CD14-positive monocyte (primary cell): ENCODE measurements at regions of chr3 and their contacts with region 1.

Region 1: DNA sequence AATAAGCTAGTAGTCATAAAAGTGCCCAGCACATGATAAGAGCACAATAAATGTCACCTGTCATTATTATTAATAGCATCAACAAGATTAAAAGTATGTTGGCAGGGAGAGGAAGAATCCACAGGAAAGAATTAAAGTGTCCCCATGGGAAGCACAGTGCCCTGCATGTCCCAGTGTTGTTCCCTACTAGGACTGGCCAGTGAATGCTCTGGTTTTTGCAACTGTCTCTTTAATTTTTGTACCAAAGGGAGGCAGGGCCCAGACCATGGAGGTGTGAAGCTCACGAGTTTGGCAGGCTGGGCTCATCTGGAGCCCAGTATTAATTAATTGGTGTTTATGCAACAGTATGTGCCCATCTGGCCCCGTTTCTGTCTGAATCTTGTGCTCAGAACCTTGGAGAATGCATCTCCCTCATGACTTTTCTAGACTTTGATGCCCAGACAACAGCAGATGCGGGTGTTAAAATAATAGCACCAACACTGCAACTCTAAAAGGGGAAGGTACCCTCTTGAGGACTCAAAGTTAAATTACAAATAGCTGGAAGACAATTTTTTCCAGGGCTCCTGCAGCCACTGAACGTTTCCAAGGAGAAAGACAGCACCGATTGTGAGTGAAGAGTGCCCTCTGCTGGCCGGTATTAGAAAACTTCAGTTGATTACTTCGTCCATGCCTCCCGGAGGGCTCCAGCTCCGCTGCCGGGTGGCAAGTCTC is 71.9 kb upstream of the SPATA12 start:
- DNase-seq: peak; percentile 47 to 72 (median 69)
- H3K4me3 ChIP-seq: no peak overlapping the region
- H3K4me3 Mint-ChIP-seq: peak overlapping the region in 1 of 2 donors; percentile 63
- H3K27ac ChIP-seq: no peak overlapping the region
- H3K27ac Mint-ChIP-seq: no peak overlapping the region
- H3K4me1 ChIP-seq: peaks cover 0 to 10% of the 10 kb centered on the region in 2 donors
- H3K4me1 Mint-ChIP-seq: peaks cover 15% of the 10 kb centered on the region
- H3K27me3 ChIP-seq: no peaks in the 10 kb centered on the region
- H3K27me3 Mint-ChIP-seq: peaks cover 6 to 8% (median 7%) of the 10 kb centered on the region in 3 donors
- CTCF ChIP-seq: peak; percentile 92

Region 2: DNA sequence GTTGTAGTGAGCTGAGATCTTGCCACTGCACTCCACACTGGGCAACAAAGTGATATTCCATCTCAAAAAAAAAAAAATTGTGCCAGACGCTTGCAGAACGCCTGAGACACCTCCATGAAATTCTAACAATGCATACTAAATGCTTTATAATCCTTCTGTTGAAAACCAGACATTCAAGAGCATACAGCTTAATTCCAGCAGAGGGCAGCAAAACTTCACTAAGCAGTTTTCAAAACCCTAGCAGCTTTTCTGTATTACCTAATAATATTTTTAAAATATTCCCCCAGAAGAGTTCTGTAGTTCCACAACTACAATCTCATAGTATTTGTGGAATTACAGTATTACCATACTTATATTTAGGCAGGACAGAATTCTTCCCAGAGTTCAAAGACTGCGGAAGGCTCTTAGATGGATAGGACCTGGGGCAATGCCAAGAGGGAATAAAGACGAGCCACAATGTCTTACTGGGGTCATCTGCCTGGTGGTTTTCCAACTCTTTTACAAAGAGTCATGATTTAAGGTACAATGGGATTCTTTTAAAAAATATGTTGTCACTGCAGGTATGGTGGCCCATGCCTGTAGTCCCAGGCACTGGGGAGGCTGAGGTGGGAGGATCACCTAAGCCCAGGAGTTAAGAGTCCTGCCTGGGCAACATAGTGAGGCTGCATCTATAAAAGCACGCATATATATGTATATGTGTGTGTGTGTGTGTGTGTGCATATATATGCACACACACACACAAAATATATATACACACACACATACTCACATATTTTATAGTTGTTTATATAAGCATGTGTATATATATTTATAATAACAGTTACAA is 285.9 kb before region 1 on chr3:
- intact Hi-C with region 1: loop called (anchors 2 kb)
- DNase-seq: peak; percentile 54 to 73 (median 65)
- H3K4me3 ChIP-seq: no peak overlapping the region
- H3K4me3 Mint-ChIP-seq: no peak overlapping the region
- H3K27ac ChIP-seq: no peak overlapping the region
- H3K27ac Mint-ChIP-seq: peak overlapping the region in 1 of 7 donors; percentile 35
- H3K4me1 ChIP-seq: peaks cover 0 to 8% of the 10 kb centered on the region in 2 donors
- H3K4me1 Mint-ChIP-seq: peaks cover 21% of the 10 kb centered on the region
- H3K27me3 ChIP-seq: no peaks in the 10 kb centered on the region
- H3K27me3 Mint-ChIP-seq: peaks cover 0 to 1% (median 0%) of the 10 kb centered on the region in 3 donors
- CTCF ChIP-seq: peak; percentile 77

Region 3: DNA sequence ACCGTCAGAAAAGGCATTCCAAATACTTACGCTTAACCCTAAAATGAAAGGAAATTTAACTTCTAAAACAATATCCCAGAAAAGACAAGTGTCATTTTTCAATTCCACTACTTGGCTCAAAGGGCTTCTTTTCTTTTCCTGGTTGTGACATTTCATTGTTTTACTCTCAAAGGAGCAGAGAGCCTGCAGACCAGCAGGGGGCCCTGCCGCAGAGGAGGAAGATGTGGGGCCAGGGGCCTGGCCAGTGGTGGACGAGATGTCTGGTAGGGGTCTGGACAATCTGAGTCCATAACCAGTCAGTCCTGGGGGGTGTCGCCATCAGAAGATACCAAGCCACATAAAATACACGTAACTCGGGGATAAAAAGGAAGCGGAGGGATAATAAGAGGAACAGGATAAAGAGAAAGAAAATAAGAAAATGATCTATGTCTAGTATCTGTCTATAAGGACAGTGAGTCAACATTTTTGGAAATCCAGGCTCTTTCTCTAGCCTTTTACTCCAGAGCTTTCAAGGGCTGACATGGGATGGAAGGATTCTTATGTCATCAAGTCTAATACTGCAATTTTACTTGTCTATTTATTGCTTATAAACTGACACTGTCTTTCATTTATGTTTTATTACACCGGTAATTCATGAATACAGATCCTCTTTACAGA is 132.6 kb before region 1 on chr3:
- intact Hi-C with region 1: loop called in 1 of 2 experiments (anchors 5 kb)
- DNase-seq: peak; percentile 12 to 35 (median 31)
- H3K4me3 ChIP-seq: peak overlapping the region in 1 of 3 experiments; percentile 52
- H3K4me3 Mint-ChIP-seq: peak overlapping the region; percentile 75 to 92
- H3K27ac ChIP-seq: no peak overlapping the region
- H3K27ac Mint-ChIP-seq: peak overlapping the region in 3 of 7 donors; percentile 15 to 38 (median 32)
- H3K4me1 ChIP-seq: no peaks in the 10 kb centered on the region
- H3K4me1 Mint-ChIP-seq: peaks cover 7% of the 10 kb centered on the region
- H3K27me3 ChIP-seq: no peaks in the 10 kb centered on the region
- H3K27me3 Mint-ChIP-seq: peaks cover 0 to 4% (median 2%) of the 10 kb centered on the region in 3 donors
- CTCF ChIP-seq: peak; percentile 73

Region 4: DNA sequence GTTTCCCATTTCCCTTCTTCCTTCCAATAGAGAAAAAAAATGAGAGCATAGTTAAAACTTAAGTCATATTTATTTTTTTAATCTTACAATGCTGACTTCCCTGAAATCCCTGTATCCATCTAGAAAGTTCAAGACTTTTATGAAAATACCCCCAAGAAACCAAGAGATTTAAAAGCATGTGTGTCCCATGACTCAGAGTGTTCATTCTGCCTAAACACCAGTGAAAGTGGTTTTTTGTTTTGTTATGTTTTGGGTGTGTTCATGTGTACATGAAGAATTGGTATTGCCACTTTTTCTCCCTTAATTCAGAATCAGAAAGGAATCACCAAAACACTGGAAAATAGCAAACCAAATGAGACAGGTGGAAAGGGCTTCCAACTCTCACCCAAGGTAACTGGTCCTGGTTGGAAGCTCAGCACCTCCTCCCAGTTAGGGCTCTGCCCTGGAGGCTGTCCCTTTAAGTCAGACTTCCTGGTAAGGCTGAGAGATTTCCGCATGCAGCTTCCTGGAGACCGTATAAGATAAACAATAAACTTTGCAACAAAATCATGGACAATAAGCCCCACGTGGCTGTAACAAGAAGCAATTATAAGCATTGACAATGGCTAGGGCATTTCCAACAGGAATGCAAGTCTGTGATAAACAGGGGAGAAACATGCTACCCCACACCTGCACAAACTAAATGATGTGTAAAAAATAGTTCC is 64.9 kb before region 1 on chr3:
- intact Hi-C with region 1: loop called in 1 of 2 experiments (anchors 10 kb)
- DNase-seq: peak; percentile 49 to 80 (median 54)
- H3K4me3 ChIP-seq: peak overlapping the region in 1 of 3 experiments; percentile 33
- H3K4me3 Mint-ChIP-seq: peak overlapping the region in 1 of 2 donors; percentile 42
- H3K27ac ChIP-seq: peak overlapping the region in 1 of 2 donors; percentile 64
- H3K27ac Mint-ChIP-seq: peak overlapping the region; percentile 73 to 95 (median 89)
- H3K4me1 ChIP-seq: peaks cover 35 to 44% of the 10 kb centered on the region in 2 donors
- H3K4me1 Mint-ChIP-seq: peaks cover 46% of the 10 kb centered on the region
- H3K27me3 ChIP-seq: no peaks in the 10 kb centered on the region
- H3K27me3 Mint-ChIP-seq: no peaks in the 10 kb centered on the region
- CTCF ChIP-seq: no peak

Region 5: DNA sequence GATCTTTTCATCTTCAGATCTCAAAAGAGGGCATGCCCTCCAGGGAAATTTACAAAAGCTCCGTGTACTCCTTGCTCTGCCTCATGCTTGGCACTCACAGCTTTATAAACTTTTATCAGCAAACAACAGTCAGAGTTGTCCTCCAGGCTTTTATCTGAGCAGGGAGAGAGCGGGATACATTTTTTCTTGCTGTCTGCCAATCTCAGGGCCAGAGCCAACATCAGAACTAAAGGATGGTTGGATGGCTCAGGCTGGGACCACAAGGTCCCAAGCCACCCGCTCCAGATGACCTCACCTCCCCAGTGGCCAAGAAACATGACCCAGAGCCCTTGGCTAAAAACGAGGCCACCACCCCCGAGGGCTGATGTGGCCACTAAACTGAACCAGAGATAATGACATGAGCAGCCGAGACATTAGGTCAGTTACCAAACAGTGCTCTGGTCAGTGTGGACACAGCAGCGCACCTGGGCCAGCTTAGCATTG is 53.0 kb after region 1 on chr3:
- intact Hi-C with region 1: no loop called
- DNase-seq: no peak
- H3K4me3 ChIP-seq: no peak overlapping the region
- H3K4me3 Mint-ChIP-seq: no peak overlapping the region
- H3K27ac ChIP-seq: no peak overlapping the region
- H3K27ac Mint-ChIP-seq: peak overlapping the region in 1 of 7 donors; percentile 9
- H3K4me1 ChIP-seq: no peaks in the 10 kb centered on the region
- H3K4me1 Mint-ChIP-seq: no peaks in the 10 kb centered on the region
- H3K27me3 ChIP-seq: no peaks in the 10 kb centered on the region
- H3K27me3 Mint-ChIP-seq: peaks cover 0 to 4% (median 2%) of the 10 kb centered on the region in 3 donors
- CTCF ChIP-seq: no peak

Region 6: GRCh38 chr3:57100046-57100695 is 111.6 kb after region 1 on chr3:
- intact Hi-C with region 1: loop called in 1 of 2 experiments (anchors 5 kb)
- DNase-seq: peak; percentile 50 to 61 (median 61)
- H3K4me3 ChIP-seq: no peak overlapping the region
- H3K4me3 Mint-ChIP-seq: no peak overlapping the region
- H3K27ac ChIP-seq: no peak overlapping the region
- H3K27ac Mint-ChIP-seq: peak overlapping the region in 1 of 7 donors; percentile 46
- H3K4me1 ChIP-seq: no peaks in the 10 kb centered on the region
- H3K4me1 Mint-ChIP-seq: peaks cover 3% of the 10 kb centered on the region
- H3K27me3 ChIP-seq: no peaks in the 10 kb centered on the region
- H3K27me3 Mint-ChIP-seq: peaks cover 0 to 3% (median 1%) of the 10 kb centered on the region in 3 donors
- CTCF ChIP-seq: peak; percentile 89

Region 7: DNA sequence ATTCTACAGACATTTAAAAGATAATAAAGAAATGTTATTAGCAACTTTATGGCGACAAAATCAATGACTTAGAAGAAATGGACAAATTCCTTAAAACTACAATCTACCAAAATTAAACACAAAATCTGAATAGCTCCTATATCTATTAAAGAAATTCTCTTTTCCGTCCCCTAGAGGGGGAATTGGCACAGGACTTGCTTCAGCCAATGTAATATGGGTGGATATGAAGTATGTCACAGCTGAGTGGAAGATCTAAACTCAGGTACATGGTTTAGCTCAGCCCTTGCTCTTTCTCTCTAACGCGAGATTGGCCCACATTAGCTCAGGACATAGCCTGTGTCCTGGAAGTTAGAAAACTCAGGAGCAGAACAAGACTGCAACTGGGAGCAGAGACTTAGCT is 476.2 kb after region 1 on chr3:
- intact Hi-C with region 1: no loop called
- DNase-seq: no peak
- H3K4me3 ChIP-seq: no peak overlapping the region
- H3K4me3 Mint-ChIP-seq: no peak overlapping the region
- H3K27ac ChIP-seq: no peak overlapping the region
- H3K27ac Mint-ChIP-seq: no peak overlapping the region
- H3K4me1 ChIP-seq: no peaks in the 10 kb centered on the region
- H3K4me1 Mint-ChIP-seq: no peaks in the 10 kb centered on the region
- H3K27me3 ChIP-seq: no peaks in the 10 kb centered on the region
- H3K27me3 Mint-ChIP-seq: peaks cover 0 to 3% (median 0%) of the 10 kb centered on the region in 3 donors
- CTCF ChIP-seq: no peak